Activated T-helper 1 cell treated with anti-CD3 and anti-CD28 coated beads, Interleukin-12 subunit alpha, Interleukin-12 subunit beta, Interleukin-2, Interleukin-4 antibody, amounts not matched to agents 30 ng/mL and 10 ng/mL and 1 ng/mL, durations not matched to agents 14 hours and 24 hours and 36 hours (primary cell): ENCODE measurements at regions of chr13 and their contacts with region 1.

Region 1: DNA sequence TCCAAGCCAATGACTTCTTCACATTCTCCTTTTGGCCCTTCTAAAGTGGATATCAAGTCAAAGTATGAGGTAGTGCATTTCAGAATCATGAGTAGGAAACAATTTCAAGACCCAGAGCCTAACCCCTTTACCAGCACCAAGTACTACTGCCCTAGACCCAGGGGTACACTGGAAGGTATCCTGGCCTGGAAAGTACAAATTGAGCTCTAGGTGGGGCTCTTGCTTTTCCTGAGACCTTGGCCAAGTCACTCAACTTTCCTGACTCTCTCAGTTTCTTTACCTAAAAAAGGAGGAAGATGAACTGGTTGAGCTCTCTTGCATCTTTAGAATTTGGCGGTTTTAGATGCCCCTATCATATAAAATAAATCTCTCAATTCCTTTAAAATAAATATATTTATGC is 204.7 kb downstream of the FGF14 start:
- DNase-seq: no peak
- H3K4me3 Mint-ChIP-seq: no peak overlapping the region
- H3K27ac Mint-ChIP-seq: no peak overlapping the region
- H3K4me1 Mint-ChIP-seq: no peaks in the 10 kb centered on the region
- H3K27me3 Mint-ChIP-seq: peaks cover 5% of the 10 kb centered on the region

Region 2: DNA sequence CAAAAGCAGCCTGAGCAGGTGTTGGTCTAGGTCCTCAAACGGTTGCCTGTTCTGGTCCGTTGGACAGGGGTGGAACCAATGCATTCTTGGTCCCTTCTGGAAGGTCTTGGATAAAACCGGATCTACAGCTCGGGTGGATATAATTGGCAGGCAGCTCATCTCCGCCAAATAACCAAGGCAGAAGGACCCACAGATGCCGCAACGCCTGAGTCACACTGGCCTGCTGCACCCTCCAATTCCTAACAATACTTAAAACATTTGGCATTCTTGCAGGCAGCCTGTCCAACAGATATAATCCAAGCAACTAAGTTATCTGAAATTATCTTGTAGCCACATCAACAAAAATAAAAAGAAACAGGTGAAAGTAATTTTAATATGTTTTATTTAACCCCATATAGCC is 263.6 kb after region 1 on chr13:
- intact Hi-C with region 1: loop called (anchors 1 kb)
- DNase-seq: no peak
- H3K4me3 Mint-ChIP-seq: no peak overlapping the region
- H3K27ac Mint-ChIP-seq: no peak overlapping the region
- H3K4me1 Mint-ChIP-seq: peaks cover 5% of the 10 kb centered on the region
- H3K27me3 Mint-ChIP-seq: peaks cover 5% of the 10 kb centered on the region